H1 (cell line): ENCODE measurements at regions of chr18 and their contacts with region 1.

Region 1: GRCh38 chr18:24138789-24139616 is at the start of gene CABYR:
- DNase-seq: peak; percentile 93 to 96
- H3K4me3 ChIP-seq: peak within 1 kb of the TSS; percentile 51 to 75 (median 60)
- H3K27ac ChIP-seq: peak within 1 kb of the TSS; percentile 44; the same call in 1 of the 2 replicates
- H3K4me1 ChIP-seq: peaks cover 0 to 12% (median 7%) of the 10 kb centered on the region in 4 experiments; a peak in 5 of 7 replicates
- H3K27me3 ChIP-seq: no peaks in the 10 kb centered on the region
- CTCF ChIP-seq: no peak
- EP300 ChIP-seq: no peak
- POLR2A ChIP-seq: peak; percentile 100
- RAD21 ChIP-seq: no peak
- total RNA-seq, gene CABYR: 18.8 and 20.1 TPM in 2 replicates

Region 2: GRCh38 chr18:23872701-23873550 is 266.1 kb before region 1 on chr18:
- CTCF ChIA-PET with region 1: no interaction called
- POLR2A ChIA-PET with region 1: no interaction called
- DNase-seq: no peak
- H3K4me3 ChIP-seq: no peak overlapping the region
- H3K27ac ChIP-seq: no peak overlapping the region
- H3K4me1 ChIP-seq: peaks cover 0 to 4% (median 3%) of the 10 kb centered on the region in 4 experiments; a peak in 4 of 7 replicates
- H3K27me3 ChIP-seq: no peaks in the 10 kb centered on the region
- CTCF ChIP-seq: no peak
- EP300 ChIP-seq: no peak
- POLR2A ChIP-seq: no peak
- RAD21 ChIP-seq: no peak

Region 3: GRCh38 chr18:24112874-24113615 is 26.0 kb before region 1 on chr18:
- CTCF ChIA-PET with region 1: interaction called, 3 read pairs
- POLR2A ChIA-PET with region 1: interaction called, 19 read pairs
- DNase-seq: no peak
- H3K4me3 ChIP-seq: no peak overlapping the region
- H3K27ac ChIP-seq: 0 out of 2 replicates have a peak overlapping the region, but pooled peaks have one; percentile 22
- H3K4me1 ChIP-seq: peaks cover 0 to 4% (median 2%) of the 10 kb centered on the region in 4 experiments; a peak in 2 of 7 replicates
- H3K27me3 ChIP-seq: no peaks in the 10 kb centered on the region
- CTCF ChIP-seq: no peak
- EP300 ChIP-seq: no peak
- POLR2A ChIP-seq: no peak
- RAD21 ChIP-seq: no peak

Region 4: GRCh38 chr18:24157855-24158254 is 18.9 kb after region 1 on chr18:
- CTCF ChIA-PET with region 1: no interaction called
- POLR2A ChIA-PET with region 1: interaction called, 31 read pairs
- DNase-seq: no peak
- H3K4me3 ChIP-seq: no peak overlapping the region
- H3K27ac ChIP-seq: no peak overlapping the region
- H3K4me1 ChIP-seq: no peaks in the 10 kb centered on the region
- H3K27me3 ChIP-seq: no peaks in the 10 kb centered on the region
- CTCF ChIP-seq: no peak
- EP300 ChIP-seq: no peak
- POLR2A ChIP-seq: no peak
- RAD21 ChIP-seq: no peak

Region 5: GRCh38 chr18:24189007-24189528 is 50.1 kb after region 1 on chr18:
- CTCF ChIA-PET with region 1: no interaction called
- POLR2A ChIA-PET with region 1: interaction called, 10 read pairs
- DNase-seq: no peak
- H3K4me3 ChIP-seq: no peak overlapping the region
- H3K27ac ChIP-seq: peak overlapping the region; percentile 24; the same call in 1 of the 2 replicates
- H3K4me1 ChIP-seq: 0 out of 7 replicates have a peak, but pooled peaks cover 0 to 2% (median under 1%) of the 10 kb centered on the region in 4 experiments
- H3K27me3 ChIP-seq: no peaks in the 10 kb centered on the region
- CTCF ChIP-seq: no peak
- EP300 ChIP-seq: no peak
- POLR2A ChIP-seq: no peak
- RAD21 ChIP-seq: no peak

Region 6: DNA sequence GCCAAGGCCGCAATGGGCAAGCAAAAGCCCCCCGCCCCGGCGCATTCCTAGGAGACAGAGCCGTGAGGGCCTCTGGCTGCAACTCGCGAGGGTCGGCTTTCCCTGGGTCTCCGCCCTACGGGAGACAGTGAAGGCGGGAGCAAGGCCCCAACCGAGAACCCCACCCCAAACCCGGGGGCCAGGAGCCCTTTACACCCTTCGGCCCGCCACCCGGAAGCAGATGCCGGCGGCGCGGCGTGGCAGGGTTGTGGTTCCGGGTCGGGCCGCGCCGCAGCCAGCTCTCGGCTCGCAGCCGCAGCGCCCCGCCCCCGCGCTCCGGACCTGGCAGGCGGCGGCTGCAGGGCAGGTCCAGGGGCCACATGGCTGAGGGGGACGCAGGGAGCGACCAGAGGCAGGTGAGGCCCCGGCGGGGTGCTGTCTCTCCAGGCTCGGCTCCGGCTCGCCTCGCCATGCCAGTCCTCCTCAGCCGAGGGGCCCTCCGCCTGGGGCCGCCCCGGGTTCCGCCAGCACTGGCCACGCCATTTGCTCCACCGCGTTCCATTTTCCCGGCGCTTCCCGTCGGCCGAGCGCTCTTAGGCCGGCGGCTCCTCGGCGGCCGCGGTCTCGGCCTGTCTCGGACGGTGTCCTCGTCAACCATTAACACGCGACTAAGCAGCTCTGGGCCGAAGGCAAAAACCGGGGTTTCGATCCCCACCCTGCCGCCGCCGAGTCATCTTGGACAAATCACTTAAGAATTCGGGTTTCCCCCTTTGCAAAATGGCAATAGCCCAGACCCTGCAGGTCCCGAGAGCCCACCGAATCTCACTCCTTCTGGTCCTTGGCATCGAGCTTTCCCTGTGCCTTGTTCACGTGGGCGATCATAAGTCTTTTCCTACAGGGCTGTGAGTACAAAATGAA is 287.6 kb after region 1 on chr18 and contains the start of gene IMPACT:
- CTCF ChIA-PET with region 1: no interaction called
- POLR2A ChIA-PET with region 1: interaction called, 10 read pairs
- DNase-seq: peak; percentile 81 to 95
- H3K4me3 ChIP-seq: peak within 1 kb of the TSS; percentile 83 to 94 (median 84)
- H3K27ac ChIP-seq: peak within 1 kb of the TSS; percentile 90
- H3K4me1 ChIP-seq: peaks cover 0 to 6% (median 1%) of the 10 kb centered on the region in 4 experiments; a peak in 2 of 7 replicates
- H3K27me3 ChIP-seq: no peaks in the 10 kb centered on the region
- CTCF ChIP-seq: no peak
- EP300 ChIP-seq: peak in 1 of 2 experiments; percentile 84; a peak in 1 of 3 replicates
- POLR2A ChIP-seq: peak; percentile 73 to 98
- RAD21 ChIP-seq: no peak
- total RNA-seq, gene IMPACT: 44.6 and 50.6 TPM in 2 replicates